Heart right ventricle (tissue), 16 donors: ENCODE measurements at regions of chr6 and their contacts with region 1.

Region 1: GRCh38 chr6:166402582-166403277 is 20.0 kb upstream of the MPC1 start:
- DNase-seq: no peak
- ATAC-seq: no peak
- H3K4me3 ChIP-seq: no peak overlapping the region
- H3K27ac ChIP-seq: no peak overlapping the region
- H3K4me1 ChIP-seq: peaks cover 0 to 4% (median 0%) of the 10 kb centered on the region in 9 donors
- H3K27me3 ChIP-seq: peaks cover 0 to 16% (median 0%) of the 10 kb centered on the region in 7 donors
- CTCF ChIP-seq: no peak

Region 2: GRCh38 chr6:165884813-165885765 is 517.6 kb before region 1 on chr6:
- intact Hi-C with region 1: loop called in 1 of 10 experiments (anchors 10 kb)
- DNase-seq: peak; percentile 77 to 82
- ATAC-seq: peak; percentile 82 to 97 (median 90)
- H3K4me3 ChIP-seq: no peak overlapping the region
- H3K27ac ChIP-seq: no peak overlapping the region
- H3K4me1 ChIP-seq: no peaks in the 10 kb centered on the region
- H3K27me3 ChIP-seq: peaks cover 0 to 6% (median 2%) of the 10 kb centered on the region in 7 donors
- CTCF ChIP-seq: peak; percentile 82 to 94 (median 92)

Region 3: DNA sequence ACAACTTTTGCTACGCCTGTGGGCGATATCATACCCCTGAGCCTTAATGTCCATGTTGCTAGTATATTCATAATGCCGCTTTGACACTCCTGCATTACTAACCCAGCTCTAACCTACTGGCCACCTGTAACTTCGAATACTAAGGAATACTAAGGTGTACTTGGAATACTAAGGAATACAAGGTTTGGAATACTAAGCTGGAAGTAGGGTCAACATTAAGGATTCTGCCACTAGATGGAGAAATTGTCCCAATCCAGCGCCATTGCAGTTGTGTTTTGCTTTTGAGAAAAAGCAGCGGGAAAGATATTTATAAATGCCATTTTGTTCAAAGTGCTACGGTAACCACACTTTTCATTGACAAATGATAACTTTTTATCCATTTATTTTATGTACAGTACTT is 245.8 kb before region 1 on chr6:
- intact Hi-C with region 1: loop called in 9 of 10 experiments (anchors 5 to 10 kb)
- DNase-seq: no peak
- ATAC-seq: no peak
- H3K4me3 ChIP-seq: no peak overlapping the region
- H3K27ac ChIP-seq: no peak overlapping the region
- H3K4me1 ChIP-seq: no peaks in the 10 kb centered on the region
- H3K27me3 ChIP-seq: peaks cover 0 to 46% (median 17%) of the 10 kb centered on the region in 7 donors
- CTCF ChIP-seq: peak in 6 of 9 donors; percentile 34 to 55 (median 42)

Region 4: GRCh38 chr6:166167801-166168615 is 234.7 kb before region 1 on chr6 and contains the start of gene TBXT:
- intact Hi-C with region 1: loop called in 1 of 10 experiments (anchors 10 kb)
- DNase-seq: no peak
- ATAC-seq: no peak
- H3K4me3 ChIP-seq: peak within 1 kb of the TSS; percentile 14 to 45 (median 24)
- H3K27ac ChIP-seq: no peak within 1 kb of the TSS
- H3K4me1 ChIP-seq: peaks cover 6 to 41% (median 31%) of the 10 kb centered on the region in 9 donors
- H3K27me3 ChIP-seq: peaks cover 29 to 100% (median 98%) of the 10 kb centered on the region in 7 donors
- CTCF ChIP-seq: no peak
- total RNA-seq, gene TBXT: not detected

Region 5: DNA sequence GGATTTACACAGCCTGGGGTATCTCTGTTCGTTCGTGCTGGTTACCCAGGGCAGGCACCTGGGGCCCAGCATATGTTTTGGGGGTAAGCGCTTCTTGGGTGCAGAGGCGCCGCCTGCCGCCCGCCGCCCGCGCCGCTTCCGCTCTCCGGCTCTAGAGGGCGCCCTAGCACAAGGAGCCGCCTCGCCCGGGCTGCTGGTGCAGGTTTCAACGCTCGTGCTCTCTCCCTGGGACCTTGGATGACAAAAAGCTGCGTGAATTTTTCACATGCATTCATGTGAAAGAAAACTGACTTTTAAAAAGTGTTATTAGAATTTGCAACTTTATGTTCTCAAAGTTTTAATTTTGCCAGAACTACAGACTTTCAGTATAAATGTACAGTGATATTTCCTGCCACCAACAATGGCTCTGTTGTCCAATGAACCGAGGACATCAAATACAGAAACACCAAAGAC is 127.0 kb before region 1 on chr6:
- intact Hi-C with region 1: loop called (anchors 1 to 5 kb)
- DNase-seq: peak; percentile 32 to 75
- ATAC-seq: peak; percentile 72 to 86 (median 80)
- H3K4me3 ChIP-seq: no peak overlapping the region
- H3K27ac ChIP-seq: no peak overlapping the region
- H3K4me1 ChIP-seq: peaks cover 0 to 6% (median 0%) of the 10 kb centered on the region in 9 donors
- H3K27me3 ChIP-seq: peaks cover 0 to 24% (median 12%) of the 10 kb centered on the region in 7 donors
- CTCF ChIP-seq: peak in 8 of 9 donors; percentile 94 to 100 (median 98)

Region 6: DNA sequence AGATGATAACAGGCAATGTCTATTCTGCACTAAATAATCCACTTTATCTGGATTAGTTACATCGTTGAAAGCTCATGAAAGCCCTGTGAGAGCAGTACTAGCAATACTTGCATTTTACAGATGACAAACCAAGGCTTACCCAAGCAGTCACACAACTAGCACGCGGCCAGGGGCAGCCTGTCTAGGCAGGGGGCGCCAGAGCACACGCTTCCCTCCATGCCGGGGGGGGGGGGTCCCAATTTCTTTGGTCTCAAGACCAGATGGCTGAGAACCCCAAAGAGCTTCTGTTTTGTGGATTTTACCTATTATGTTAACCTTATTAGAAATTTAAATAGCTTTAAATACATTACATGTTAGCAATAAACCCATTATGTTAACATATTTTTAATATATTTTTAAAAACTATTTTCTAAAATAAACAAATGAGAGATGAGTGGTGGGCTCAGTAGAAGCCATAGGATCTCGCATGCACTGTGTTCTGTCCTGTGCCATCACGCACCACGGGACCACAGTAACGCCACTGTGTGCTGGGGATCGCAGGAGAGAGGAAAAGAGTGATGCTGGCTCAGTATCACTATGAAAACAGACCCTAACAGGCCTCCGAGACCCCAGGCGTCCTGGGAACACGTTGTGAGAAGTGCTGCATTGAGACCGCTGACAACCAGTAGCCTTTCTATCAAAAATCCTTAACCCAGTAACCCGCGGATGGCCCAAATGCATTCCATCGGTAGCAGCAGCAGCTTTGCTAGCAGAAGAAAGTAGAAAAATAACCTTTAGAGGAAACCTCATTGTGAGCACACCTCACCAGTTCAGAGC is 89.3 kb before region 1 on chr6:
- intact Hi-C with region 1: loop called in 9 of 10 experiments (anchors 1 to 10 kb)
- DNase-seq: no peak
- ATAC-seq: peak; percentile 58 to 91 (median 66)
- H3K4me3 ChIP-seq: no peak overlapping the region
- H3K27ac ChIP-seq: no peak overlapping the region
- H3K4me1 ChIP-seq: peaks cover 0 to 4% (median 2%) of the 10 kb centered on the region in 9 donors
- H3K27me3 ChIP-seq: peaks cover 0 to 22% (median 12%) of the 10 kb centered on the region in 7 donors
- CTCF ChIP-seq: peak; percentile 49 to 83 (median 67)